Activated T-helper 1 cell treated with anti-CD3 and anti-CD28 coated beads, Interleukin-12 subunit alpha, Interleukin-12 subunit beta, Interleukin-2, Interleukin-4 antibody, amounts not matched to agents 30 ng/mL and 10 ng/mL and 1 ng/mL, durations not matched to agents 14 hours and 24 hours and 36 hours (primary cell): ENCODE measurements at regions of chr1 and their contacts with region 1.

Region 1: DNA sequence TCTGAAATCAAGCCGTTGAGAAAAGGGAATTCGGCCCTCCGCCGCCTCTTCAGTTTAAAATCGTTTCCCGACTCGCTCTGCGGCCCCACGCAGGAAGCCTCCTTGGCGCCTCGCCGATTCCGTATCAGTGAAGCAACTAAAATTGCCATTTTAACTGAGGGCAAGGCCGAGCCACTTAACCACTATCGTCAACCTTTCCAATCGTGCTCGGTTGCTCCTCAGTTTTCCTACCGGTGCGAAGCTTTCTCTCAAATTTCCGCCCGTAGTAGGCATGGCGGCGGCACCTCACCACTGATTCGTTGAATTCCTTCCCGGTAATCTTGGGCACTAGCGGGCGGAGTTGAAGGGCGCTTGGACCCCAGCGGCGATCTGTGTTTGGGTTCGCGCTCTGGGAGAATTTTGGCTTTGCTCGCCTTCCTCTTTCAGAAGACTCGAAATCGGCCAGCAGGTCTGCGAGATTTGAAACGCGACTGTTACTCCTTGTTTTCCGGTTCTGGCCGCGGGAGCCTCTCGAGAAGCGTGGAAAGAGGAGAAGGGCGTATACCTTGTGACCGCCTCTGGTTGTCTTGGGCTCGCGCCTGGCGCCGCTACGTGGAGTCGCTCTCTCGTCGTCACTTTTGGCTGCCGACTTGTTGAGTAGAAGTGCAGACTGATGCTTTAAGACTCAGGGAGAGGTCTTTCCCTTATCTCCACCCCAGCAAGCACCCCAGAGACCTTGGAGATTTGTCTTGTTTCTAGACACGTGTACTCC is at the starts of genes CENPL and DARS2:
- DNase-seq: peak; percentile 90
- H3K4me3 Mint-ChIP-seq: peak within 1 kb of the TSS; percentile 91
- H3K27ac Mint-ChIP-seq: peak within 1 kb of the TSS; percentile 95
- H3K4me1 Mint-ChIP-seq: peaks cover 48% of the 10 kb centered on the region
- H3K27me3 Mint-ChIP-seq: no peaks in the 10 kb centered on the region
- total RNA-seq, gene CENPL: 23.6 and 25.7 TPM in 2 replicates
- total RNA-seq, gene DARS2: 41.9 TPM in 2 replicates

Region 2: GRCh38 chr1:173420330-173420806 is 404.1 kb before region 1 on chr1:
- intact Hi-C with region 1: loop called (anchors 1 kb)
- DNase-seq: peak; percentile 42
- H3K4me3 Mint-ChIP-seq: no peak overlapping the region
- H3K27ac Mint-ChIP-seq: no peak overlapping the region
- H3K4me1 Mint-ChIP-seq: peaks cover 13% of the 10 kb centered on the region
- H3K27me3 Mint-ChIP-seq: no peaks in the 10 kb centered on the region

Region 3: GRCh38 chr1:173476664-173477285 is 347.7 kb before region 1 on chr1:
- intact Hi-C with region 1: loop called (anchors 1 kb)
- DNase-seq: peak; percentile 74
- H3K4me3 Mint-ChIP-seq: peak overlapping the region; percentile 92
- H3K27ac Mint-ChIP-seq: peak overlapping the region; percentile 93
- H3K4me1 Mint-ChIP-seq: peaks cover 65% of the 10 kb centered on the region
- H3K27me3 Mint-ChIP-seq: no peaks in the 10 kb centered on the region

Region 4: DNA sequence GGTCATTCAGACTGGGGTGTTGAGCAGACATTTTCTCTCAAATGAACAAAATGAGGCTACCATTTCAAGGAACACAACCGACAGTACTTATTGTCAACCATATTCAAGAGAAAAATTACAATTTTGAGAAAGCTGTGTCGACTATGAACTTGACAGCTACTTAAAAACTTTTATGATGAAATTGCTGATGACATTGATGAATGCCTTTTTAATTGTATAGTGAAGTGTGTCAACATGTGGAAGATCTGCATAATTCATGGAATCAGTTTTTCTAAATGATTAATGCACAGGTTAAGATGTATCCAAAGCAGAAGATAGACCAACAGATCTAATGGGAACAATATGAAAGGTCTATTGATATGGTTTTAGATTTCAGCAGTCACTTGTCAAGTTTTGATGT is 34.7 kb before region 1 on chr1:
- intact Hi-C with region 1: no loop called
- DNase-seq: no peak
- H3K4me3 Mint-ChIP-seq: no peak overlapping the region
- H3K27ac Mint-ChIP-seq: no peak overlapping the region
- H3K4me1 Mint-ChIP-seq: no peaks in the 10 kb centered on the region
- H3K27me3 Mint-ChIP-seq: no peaks in the 10 kb centered on the region

Region 5: DNA sequence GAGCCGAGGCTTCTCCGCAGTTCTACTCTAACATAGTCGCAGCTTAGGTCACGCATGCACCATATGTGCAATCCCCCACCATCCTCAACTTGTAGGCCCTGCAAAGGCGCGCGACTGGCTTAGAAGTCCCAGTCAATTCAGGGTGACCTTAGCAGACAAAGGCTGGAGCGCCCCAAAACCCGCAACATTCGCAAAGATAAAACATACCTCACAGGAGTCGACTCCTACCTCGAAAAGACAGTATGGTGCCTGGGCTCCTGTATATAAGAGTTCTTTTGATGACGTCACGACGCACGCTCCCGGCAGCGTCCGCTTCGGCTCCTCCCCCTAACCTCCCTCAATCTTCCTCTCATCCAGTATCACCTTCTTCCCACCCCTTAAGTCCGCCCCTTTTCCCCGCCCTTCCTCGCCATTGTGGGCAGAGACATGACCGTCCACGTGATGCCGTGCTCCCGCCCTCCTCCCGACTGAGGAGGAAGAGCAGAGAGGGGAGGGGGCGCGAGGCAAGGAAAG is 43.3 kb after region 1 on chr1 and contains the start of gene GAS5:
- intact Hi-C with region 1: loop called (anchors 1 kb)
- DNase-seq: peak; percentile 99
- H3K4me3 Mint-ChIP-seq: peak within 1 kb of the TSS; percentile 98
- H3K27ac Mint-ChIP-seq: peak within 1 kb of the TSS; percentile 98
- H3K4me1 Mint-ChIP-seq: peaks cover 66% of the 10 kb centered on the region
- H3K27me3 Mint-ChIP-seq: no peaks in the 10 kb centered on the region
- total RNA-seq, gene GAS5: 653 and 688 TPM in 2 replicates

Region 6: DNA sequence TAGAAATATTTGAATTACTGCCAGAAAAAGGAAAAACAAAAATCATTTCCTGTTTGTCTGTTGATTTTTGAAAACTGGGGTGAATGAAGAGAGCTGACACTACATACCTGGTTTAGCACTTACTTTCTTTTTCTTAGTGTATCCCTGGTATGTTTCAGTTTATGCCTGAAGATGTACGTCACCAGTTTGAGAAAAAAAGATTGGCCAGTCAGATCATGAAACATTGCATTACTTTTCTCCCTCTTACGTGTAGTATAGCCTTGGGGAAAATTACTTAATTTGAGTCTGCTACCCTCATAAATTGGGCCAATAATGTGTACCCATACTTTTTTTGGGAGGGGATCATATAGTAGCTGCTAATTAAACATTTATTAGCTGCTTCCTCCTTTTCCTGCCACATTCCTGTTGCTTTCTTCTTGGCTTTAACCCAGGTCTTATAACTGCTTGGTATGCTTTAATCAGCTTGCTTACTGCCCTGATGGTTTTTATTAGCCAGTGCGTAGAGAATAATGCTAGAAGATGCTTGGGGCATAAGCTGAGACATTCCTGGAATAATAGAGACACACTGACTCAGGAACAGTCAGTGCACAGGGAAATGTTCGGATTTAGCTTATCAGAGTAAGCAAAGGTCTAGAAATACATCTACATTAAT is 366.9 kb after region 1 on chr1:
- intact Hi-C with region 1: no loop called
- DNase-seq: no peak
- H3K4me3 Mint-ChIP-seq: no peak overlapping the region
- H3K27ac Mint-ChIP-seq: no peak overlapping the region
- H3K4me1 Mint-ChIP-seq: peaks cover 11% of the 10 kb centered on the region
- H3K27me3 Mint-ChIP-seq: no peaks in the 10 kb centered on the region

Region 7: DNA sequence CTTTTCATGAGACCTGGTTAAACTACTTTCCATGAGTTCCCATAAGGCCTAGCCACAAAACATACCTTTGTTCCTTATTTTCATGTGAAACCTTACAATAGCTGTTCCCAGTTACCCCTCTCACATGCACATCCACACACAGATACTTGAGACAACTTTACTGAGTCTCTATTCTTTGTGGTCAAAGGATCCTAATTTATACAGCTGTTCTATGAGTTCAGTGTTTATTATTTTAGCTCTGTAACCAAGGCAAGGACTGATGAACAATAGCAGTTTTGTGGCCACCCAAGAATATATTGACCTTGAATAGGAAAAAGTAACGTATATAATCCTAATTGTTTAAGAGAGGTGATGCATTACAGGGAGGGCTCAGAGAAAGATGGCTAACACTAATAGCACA is 1014.7 kb after region 1 on chr1:
- intact Hi-C with region 1: no loop called
- DNase-seq: no peak
- H3K4me3 Mint-ChIP-seq: no peak overlapping the region
- H3K27ac Mint-ChIP-seq: no peak overlapping the region
- H3K4me1 Mint-ChIP-seq: no peaks in the 10 kb centered on the region
- H3K27me3 Mint-ChIP-seq: no peaks in the 10 kb centered on the region

Region 8: DNA sequence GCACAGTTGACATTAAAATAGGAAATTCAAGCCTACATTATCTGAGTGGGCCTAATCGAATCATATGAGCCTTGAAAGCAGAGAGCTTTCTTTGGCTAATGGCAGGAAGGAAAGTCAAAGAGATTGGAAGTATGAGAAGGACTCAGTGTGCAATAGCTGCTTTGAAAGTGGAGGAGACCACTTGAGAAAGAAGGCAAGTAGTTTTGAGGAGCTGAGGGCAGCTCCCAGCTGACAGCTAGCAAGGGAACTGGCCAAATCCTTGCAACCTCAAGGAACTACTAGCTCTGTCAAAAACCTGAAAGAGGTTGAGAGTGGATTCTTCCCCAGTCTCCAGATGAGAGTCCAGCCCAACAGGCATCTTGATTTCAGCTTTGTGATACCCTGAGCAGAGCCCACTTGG is 1026.2 kb after region 1 on chr1:
- intact Hi-C with region 1: no loop called
- DNase-seq: no peak
- H3K4me3 Mint-ChIP-seq: no peak overlapping the region
- H3K27ac Mint-ChIP-seq: no peak overlapping the region
- H3K4me1 Mint-ChIP-seq: no peaks in the 10 kb centered on the region
- H3K27me3 Mint-ChIP-seq: no peaks in the 10 kb centered on the region